ENCODE measurements at regions of chr6 and their contacts with region 1.

Region 1: DNA sequence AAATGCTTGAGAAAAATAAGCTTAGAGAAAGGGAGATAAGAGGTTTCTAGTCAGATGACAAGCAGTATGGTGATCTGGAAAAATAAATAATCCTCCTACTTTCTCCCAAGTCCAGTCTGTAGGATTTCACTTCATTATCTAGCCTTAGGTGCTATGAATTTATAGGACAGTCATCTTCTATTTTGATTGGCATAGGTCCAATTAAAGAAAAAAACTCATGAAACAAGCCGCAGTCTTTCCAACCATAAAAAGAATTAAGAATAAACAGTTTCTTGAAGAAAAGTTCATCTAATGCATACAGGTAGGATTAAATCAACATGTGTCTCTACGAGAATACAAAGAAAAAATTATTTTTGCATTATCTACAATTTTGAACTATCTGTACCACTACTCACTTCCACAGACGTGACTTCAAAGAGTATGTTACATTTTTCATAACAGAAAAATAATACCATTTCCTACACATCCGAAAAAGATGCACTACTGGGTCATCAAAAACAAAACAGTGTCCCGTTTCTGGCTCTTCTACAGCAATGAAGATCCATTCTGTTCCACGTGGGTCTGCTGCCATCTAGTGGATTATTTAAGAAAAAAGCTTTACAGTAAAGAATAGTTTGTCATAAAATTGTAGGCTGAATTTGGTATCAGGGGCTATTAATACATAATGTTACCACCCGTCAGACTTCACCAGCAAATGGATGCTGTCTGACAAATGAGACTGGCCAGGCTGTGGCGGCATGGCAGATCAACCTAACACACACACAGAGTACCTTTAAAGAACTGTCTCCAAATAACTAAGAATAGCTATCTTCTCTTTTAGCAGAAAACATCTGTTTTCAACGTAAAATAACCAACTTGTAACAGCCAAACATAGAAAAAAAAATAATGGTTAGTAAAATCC is 28.9 kb downstream of the STX7 start:
- DNase-seq: peak; percentile 56 to 67 (median 61)
- H3K4me3 ChIP-seq: no peak overlapping the region
- H3K4me3 Mint-ChIP-seq: no peak overlapping the region
- H3K27ac ChIP-seq: no peak overlapping the region
- H3K27ac Mint-ChIP-seq: peak overlapping the region in 2 of 7 donors; percentile 17 to 30
- H3K4me1 ChIP-seq: peaks cover 6% of the 10 kb centered on the region
- H3K4me1 Mint-ChIP-seq: peaks cover 14 to 21% (median 20%) of the 10 kb centered on the region in 4 donors
- H3K27me3 ChIP-seq: no peaks in the 10 kb centered on the region
- H3K27me3 Mint-ChIP-seq: no peaks in the 10 kb centered on the region

Region 2: DNA sequence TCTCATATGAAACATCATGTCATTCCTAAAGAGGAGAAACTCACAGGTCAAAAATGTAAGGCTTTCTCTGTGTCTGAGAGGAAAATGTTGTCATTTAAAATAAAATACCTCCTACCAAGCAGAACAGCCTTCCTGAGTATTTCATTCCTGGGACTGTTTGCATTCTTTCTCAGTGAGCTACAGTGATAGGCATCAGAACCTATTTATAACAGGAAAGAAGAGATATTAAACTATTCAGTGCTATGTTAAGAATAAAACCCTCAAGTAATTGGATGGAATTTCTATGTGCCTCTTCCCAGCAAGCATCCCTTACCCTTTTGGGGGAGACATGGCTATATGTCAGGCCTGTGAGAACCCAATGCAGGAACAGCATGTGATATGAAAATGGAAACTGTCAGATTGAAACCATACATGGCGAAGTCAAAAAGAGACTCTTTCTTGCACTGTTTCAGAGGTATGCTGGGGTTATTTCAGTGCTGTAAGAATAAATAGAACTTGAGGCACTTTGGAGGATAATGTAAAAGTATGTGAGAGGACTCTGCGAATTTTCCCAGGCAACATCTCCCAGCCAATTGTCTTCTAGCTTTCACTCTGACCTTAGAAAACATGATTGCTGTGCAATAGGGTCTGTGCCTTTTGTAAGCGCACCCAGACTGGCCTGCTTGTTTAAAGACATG is 399.1 kb before region 1 on chr6:
- CTCF ChIA-PET with region 1: no interaction called
- POLR2A ChIA-PET with region 1: no interaction called
- intact Hi-C with region 1: no loop called
- DNase-seq: no peak
- H3K4me3 ChIP-seq: no peak overlapping the region
- H3K4me3 Mint-ChIP-seq: no peak overlapping the region
- H3K27ac ChIP-seq: no peak overlapping the region
- H3K27ac Mint-ChIP-seq: no peak overlapping the region
- H3K4me1 ChIP-seq: no peaks in the 10 kb centered on the region
- H3K4me1 Mint-ChIP-seq: no peaks in the 10 kb centered on the region
- H3K27me3 ChIP-seq: no peaks in the 10 kb centered on the region
- H3K27me3 Mint-ChIP-seq: no peaks in the 10 kb centered on the region

Region 3: GRCh38 chr6:132300323-132300949 is 183.6 kb before region 1 on chr6:
- CTCF ChIA-PET with region 1: interaction called, 12 read pairs
- POLR2A ChIA-PET with region 1: no interaction called
- intact Hi-C with region 1: loop called (anchors 1 kb)
- DNase-seq: peak in 1 of 5 donors; percentile 5
- H3K4me3 ChIP-seq: no peak overlapping the region
- H3K4me3 Mint-ChIP-seq: no peak overlapping the region
- H3K27ac ChIP-seq: no peak overlapping the region
- H3K27ac Mint-ChIP-seq: no peak overlapping the region
- H3K4me1 ChIP-seq: no peaks in the 10 kb centered on the region
- H3K4me1 Mint-ChIP-seq: no peaks in the 10 kb centered on the region
- H3K27me3 ChIP-seq: no peaks in the 10 kb centered on the region
- H3K27me3 Mint-ChIP-seq: peaks cover 17 to 19% of the 10 kb centered on the region in 2 donors

Region 4: DNA sequence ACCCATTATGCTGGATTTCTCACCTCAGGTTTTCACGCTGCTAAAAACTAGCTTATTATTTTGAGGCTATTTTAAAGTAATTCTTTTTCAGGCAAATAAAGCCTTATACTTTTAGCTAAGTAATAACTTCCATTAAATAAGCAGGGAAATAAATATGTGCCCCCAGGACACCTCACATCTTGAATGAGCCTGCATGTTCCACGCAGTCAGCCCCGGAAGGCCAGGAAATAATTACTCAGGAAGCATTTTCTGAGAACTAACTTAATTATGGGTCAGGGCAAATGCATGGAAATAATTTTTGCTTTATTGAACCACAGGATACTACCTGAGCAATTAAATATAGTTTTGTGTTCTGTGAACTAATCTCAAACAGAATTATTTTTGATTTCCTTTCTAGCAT is 12.2 kb before region 1 on chr6:
- CTCF ChIA-PET with region 1: interaction called, 15 read pairs
- POLR2A ChIA-PET with region 1: no interaction called
- intact Hi-C with region 1: no loop called
- DNase-seq: no peak
- H3K4me3 ChIP-seq: no peak overlapping the region
- H3K4me3 Mint-ChIP-seq: no peak overlapping the region
- H3K27ac ChIP-seq: no peak overlapping the region
- H3K27ac Mint-ChIP-seq: peak overlapping the region in 1 of 7 donors; percentile 3
- H3K4me1 ChIP-seq: no peaks in the 10 kb centered on the region
- H3K4me1 Mint-ChIP-seq: no peaks in the 10 kb centered on the region
- H3K27me3 ChIP-seq: no peaks in the 10 kb centered on the region
- H3K27me3 Mint-ChIP-seq: no peaks in the 10 kb centered on the region

Region 5: DNA sequence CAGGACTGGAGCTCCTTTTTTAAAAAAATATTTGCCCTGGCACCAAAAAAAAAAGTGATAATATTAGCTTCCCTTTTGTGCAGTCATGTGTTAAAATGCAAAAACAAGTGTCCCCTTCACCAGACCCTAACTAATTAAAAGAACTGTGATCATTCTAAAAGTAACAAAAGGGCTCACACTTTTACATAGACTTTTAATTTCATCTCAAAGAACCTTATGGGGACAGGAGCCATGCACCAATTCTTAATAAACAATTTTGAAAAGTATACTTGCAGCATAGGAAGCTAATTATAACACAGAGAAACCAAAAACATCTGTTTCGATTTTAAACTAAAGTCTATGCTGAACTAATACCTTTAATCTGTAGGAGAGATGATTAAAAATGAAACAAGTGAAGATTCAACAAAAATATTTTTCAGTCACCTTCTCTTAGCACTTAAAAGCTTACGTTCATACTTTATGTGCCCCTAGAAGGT is 11.6 kb after region 1 on chr6:
- CTCF ChIA-PET with region 1: interaction called, 41 read pairs
- POLR2A ChIA-PET with region 1: no interaction called
- intact Hi-C with region 1: no loop called
- DNase-seq: no peak
- H3K4me3 ChIP-seq: no peak overlapping the region
- H3K4me3 Mint-ChIP-seq: peak overlapping the region in 1 of 8 donors; percentile 59
- H3K27ac ChIP-seq: no peak overlapping the region
- H3K27ac Mint-ChIP-seq: peak overlapping the region in 2 of 7 donors; percentile 7 to 52
- H3K4me1 ChIP-seq: peaks cover 35% of the 10 kb centered on the region
- H3K4me1 Mint-ChIP-seq: peaks cover 26 to 49% (median 46%) of the 10 kb centered on the region in 4 donors
- H3K27me3 ChIP-seq: no peaks in the 10 kb centered on the region
- H3K27me3 Mint-ChIP-seq: no peaks in the 10 kb centered on the region

Region 6: GRCh38 chr6:132512638-132513632 is 28.9 kb after region 1 on chr6 and contains the start of gene STX7:
- CTCF ChIA-PET with region 1: interaction called, 8 read pairs
- POLR2A ChIA-PET with region 1: interaction called, 7 read pairs
- intact Hi-C with region 1: loop called (anchors 2 kb)
- DNase-seq: peak; percentile 85 to 89 (median 87)
- H3K4me3 ChIP-seq: peak within 1 kb of the TSS; percentile 36 to 63
- H3K4me3 Mint-ChIP-seq: peak within 1 kb of the TSS; percentile 98 to 99 (median 98)
- H3K27ac ChIP-seq: peak within 1 kb of the TSS; percentile 54
- H3K27ac Mint-ChIP-seq: peak within 1 kb of the TSS; percentile 47 to 97 (median 92)
- H3K4me1 ChIP-seq: peaks cover 23% of the 10 kb centered on the region
- H3K4me1 Mint-ChIP-seq: peaks cover 23 to 40% (median 30%) of the 10 kb centered on the region in 4 donors
- H3K27me3 ChIP-seq: no peaks in the 10 kb centered on the region
- H3K27me3 Mint-ChIP-seq: no peaks in the 10 kb centered on the region
- total RNA-seq, gene STX7: 22.7 TPM

Region 7: DNA sequence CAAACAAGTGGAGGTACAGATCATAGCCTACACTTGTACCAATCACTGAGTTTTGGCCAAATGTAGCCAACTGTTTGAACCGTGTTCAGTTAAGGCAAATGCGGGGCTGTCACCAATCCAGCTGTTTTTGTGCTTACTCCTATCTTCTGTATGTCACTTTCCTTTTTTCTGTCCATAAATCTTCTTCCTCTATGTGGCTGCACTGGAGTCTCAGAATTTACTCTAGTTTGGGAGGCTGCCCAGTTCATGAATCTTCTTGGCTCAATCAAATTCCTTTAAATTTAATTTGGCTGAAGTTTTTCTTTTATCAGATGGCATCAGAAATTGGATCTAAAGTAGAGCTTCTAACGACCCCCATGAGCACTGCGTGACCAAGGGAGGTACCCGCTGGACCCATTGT is 40.6 kb after region 1 on chr6:
- CTCF ChIA-PET with region 1: no interaction called
- POLR2A ChIA-PET with region 1: no interaction called
- intact Hi-C with region 1: no loop called
- DNase-seq: no peak
- H3K4me3 ChIP-seq: no peak overlapping the region
- H3K4me3 Mint-ChIP-seq: no peak overlapping the region
- H3K27ac ChIP-seq: no peak overlapping the region
- H3K27ac Mint-ChIP-seq: no peak overlapping the region
- H3K4me1 ChIP-seq: no peaks in the 10 kb centered on the region
- H3K4me1 Mint-ChIP-seq: no peaks in the 10 kb centered on the region
- H3K27me3 ChIP-seq: peaks cover 6% of the 10 kb centered on the region
- H3K27me3 Mint-ChIP-seq: peaks cover 25 to 31% of the 10 kb centered on the region in 2 donors

Measured in CD4-positive, alpha-beta memory T cell (primary cell).